ENCODE measurements at regions of chr2 and their contacts with region 1.

Region 1: GRCh38 chr2:38750891-38751595 is at the start of gene SRSF7:
- DNase-seq: peak; percentile 98
- ATAC-seq: peak; percentile 77
- H3K4me3 Mint-ChIP-seq: peak within 1 kb of the TSS; percentile 98
- H3K27ac Mint-ChIP-seq: peak within 1 kb of the TSS; percentile 100
- H3K4me1 Mint-ChIP-seq: peaks cover 47% of the 10 kb centered on the region
- H3K27me3 Mint-ChIP-seq: no peaks in the 10 kb centered on the region
- total RNA-seq, gene SRSF7: 315 to 318 TPM

Region 2: DNA sequence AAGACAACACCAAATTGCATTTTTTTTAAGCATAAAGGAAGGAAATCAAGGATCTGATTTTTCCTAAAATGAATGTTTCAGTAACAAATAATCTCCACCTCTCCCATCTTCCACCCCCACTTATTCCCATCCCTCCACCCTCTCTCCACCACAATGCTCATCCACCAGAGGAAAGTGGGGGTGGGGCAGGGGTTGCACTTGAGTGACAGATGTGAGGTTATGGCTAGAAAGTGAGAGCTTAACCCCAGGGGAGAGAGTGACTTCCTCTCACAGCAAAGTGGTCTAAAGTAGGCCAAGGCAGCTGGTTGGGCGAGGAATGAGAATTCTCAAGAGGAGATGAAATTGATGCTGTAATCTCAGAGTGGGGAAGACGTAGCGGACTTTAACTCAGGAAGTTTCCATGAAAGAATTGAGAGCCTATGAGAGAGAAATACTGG is 253.0 kb before region 1 on chr2:
- POLR2A ChIA-PET with region 1: no interaction called
- DNase-seq: no peak
- ATAC-seq: no peak
- H3K4me3 Mint-ChIP-seq: no peak overlapping the region
- H3K27ac Mint-ChIP-seq: peak overlapping the region; percentile 11
- H3K4me1 Mint-ChIP-seq: peaks cover 9% of the 10 kb centered on the region
- H3K27me3 Mint-ChIP-seq: peaks cover 10% of the 10 kb centered on the region

Region 3: DNA sequence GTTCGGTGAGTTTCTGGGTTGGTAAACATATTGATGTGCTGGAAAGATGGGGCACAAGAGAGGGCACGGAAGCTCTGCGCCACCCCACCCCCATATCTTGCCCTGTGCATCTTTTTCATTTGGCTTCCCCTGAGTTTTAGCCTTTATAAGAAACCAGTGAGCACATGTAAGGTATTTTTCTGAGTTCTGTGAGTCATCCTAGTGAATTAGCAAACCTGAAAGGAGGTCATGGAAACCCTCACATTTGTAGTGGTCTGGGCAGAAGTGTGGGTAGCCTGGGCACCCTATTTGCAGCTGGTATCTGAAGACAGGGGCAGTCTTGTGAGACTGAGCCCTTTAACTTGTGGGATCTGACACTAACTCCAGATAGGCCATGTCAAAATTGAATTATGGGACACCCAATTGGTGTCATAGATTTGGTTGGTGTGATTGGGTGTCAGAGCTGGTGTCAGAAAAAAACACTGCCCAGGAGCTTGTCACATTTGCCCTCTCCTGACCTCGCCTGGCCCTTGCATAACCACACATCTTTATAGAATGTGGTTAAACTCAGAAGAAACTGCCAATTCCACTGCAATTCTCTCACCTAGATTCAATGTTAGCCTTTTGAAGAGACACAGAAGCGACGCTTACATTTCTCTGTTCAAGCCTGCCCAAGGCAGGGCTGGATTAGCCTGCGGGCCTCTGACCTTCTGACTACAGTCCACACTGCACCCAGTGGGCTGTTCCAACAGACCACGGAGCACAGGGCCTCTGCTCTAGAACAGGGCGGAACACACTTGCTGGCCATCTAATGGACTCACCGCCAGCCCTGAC is 97.1 kb before region 1 on chr2:
- POLR2A ChIA-PET with region 1: interaction called, 12 read pairs
- DNase-seq: no peak
- ATAC-seq: peak; percentile 53
- H3K4me3 Mint-ChIP-seq: peak overlapping the region; percentile 57
- H3K27ac Mint-ChIP-seq: peak overlapping the region; percentile 91
- H3K4me1 Mint-ChIP-seq: peaks cover 38% of the 10 kb centered on the region
- H3K27me3 Mint-ChIP-seq: no peaks in the 10 kb centered on the region

Region 4: GRCh38 chr2:38734299-38735058 is 16.6 kb before region 1 on chr2:
- POLR2A ChIA-PET with region 1: interaction called, 15 read pairs
- DNase-seq: peak; percentile 15
- ATAC-seq: no peak
- H3K4me3 Mint-ChIP-seq: no peak overlapping the region
- H3K27ac Mint-ChIP-seq: no peak overlapping the region
- H3K4me1 Mint-ChIP-seq: peaks cover 1% of the 10 kb centered on the region
- H3K27me3 Mint-ChIP-seq: no peaks in the 10 kb centered on the region

Region 5: DNA sequence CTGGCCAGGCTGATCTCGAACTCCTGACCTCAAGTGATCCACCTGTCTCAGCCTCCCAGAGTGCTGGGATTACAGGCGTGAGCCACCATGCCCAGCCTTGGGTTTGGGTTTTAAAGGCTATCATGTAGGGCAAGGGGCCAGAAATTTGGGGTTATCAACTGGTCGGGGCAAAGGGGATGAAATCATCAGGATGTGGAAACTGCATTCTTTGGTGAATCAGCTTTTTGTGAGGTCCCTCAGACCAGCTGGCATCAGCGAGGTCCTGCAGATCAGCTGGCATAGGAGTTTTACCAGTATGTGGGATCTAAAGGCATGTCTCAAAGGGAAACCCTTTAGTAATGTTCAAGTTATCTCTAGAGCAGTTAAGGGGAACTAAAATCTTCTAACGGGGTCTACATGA is 20.6 kb after region 1 on chr2:
- POLR2A ChIA-PET with region 1: interaction called, 25 read pairs
- DNase-seq: no peak
- ATAC-seq: no peak
- H3K4me3 Mint-ChIP-seq: no peak overlapping the region
- H3K27ac Mint-ChIP-seq: no peak overlapping the region
- H3K4me1 Mint-ChIP-seq: peaks cover 5% of the 10 kb centered on the region
- H3K27me3 Mint-ChIP-seq: peaks cover 24% of the 10 kb centered on the region

Region 6: DNA sequence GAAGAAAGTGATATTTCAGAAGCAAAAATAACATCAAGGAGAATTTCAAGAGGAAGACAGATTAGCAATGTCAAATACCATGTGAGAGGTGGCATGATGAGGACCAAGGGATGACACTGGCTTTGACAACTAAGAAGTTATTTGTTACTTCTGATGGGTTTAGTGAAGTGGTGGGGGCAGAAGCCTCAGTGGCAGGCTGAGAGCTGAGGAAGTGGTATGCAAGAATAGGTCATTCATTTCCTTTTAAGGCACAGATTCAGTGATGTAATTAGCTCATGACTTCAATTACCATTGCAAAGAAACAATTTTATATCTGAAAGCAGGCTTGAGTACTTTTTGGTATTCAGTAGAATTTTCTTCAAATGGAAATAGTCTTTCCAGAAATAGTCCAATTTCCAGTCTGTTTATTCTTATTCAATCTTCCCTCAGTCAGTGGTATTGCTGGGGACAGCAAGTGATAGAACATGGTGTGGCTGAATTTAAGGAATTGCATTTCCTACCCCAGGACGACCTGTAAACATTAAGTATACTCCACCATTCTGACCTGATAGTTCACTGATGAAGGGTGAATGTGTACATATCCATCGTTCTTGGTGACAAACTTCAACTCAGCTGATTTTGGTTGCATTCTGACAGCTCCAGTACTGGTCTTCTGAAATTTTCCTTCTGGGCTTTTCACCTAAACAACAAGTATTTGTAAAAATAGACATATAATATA is 55.1 kb after region 1 on chr2:
- POLR2A ChIA-PET with region 1: interaction called, 18 read pairs
- DNase-seq: no peak
- ATAC-seq: peak; percentile 95
- H3K4me3 Mint-ChIP-seq: no peak overlapping the region
- H3K27ac Mint-ChIP-seq: no peak overlapping the region
- H3K4me1 Mint-ChIP-seq: peaks cover 4% of the 10 kb centered on the region
- H3K27me3 Mint-ChIP-seq: no peaks in the 10 kb centered on the region

Region 7: GRCh38 chr2:38892819-38893218 is 141.8 kb after region 1 on chr2:
- POLR2A ChIA-PET with region 1: no interaction called
- DNase-seq: no peak
- ATAC-seq: no peak
- H3K4me3 Mint-ChIP-seq: no peak overlapping the region
- H3K27ac Mint-ChIP-seq: no peak overlapping the region
- H3K4me1 Mint-ChIP-seq: no peaks in the 10 kb centered on the region
- H3K27me3 Mint-ChIP-seq: peaks cover 13% of the 10 kb centered on the region

Region 8: GRCh38 chr2:39124000-39124745 is 373.1 kb after region 1 on chr2:
- POLR2A ChIA-PET with region 1: interaction called, 22 read pairs
- DNase-seq: peak; percentile 96
- ATAC-seq: peak; percentile 72
- H3K4me3 Mint-ChIP-seq: peak overlapping the region; percentile 95
- H3K27ac Mint-ChIP-seq: peak overlapping the region; percentile 96
- H3K4me1 Mint-ChIP-seq: peaks cover 53% of the 10 kb centered on the region
- H3K27me3 Mint-ChIP-seq: no peaks in the 10 kb centered on the region

Measured in activated naive CD8-positive, alpha-beta T cell treated with anti-CD3 and anti-CD28 coated beads, Interleukin-2, amount 10 ng/mL, durations not matched to agents 7 days and 5 days (primary cell).